Caco-2 (cell line): ENCODE measurements at regions of chr10 and their contacts with region 1.

Region 1: GRCh38 chr10:92757066-92757710 is 67.4 kb downstream of the HHEX start:
- DNase-seq: peak; percentile 42 to 51
- H3K4me3 ChIP-seq: no peak overlapping the region
- H3K4me3 Mint-ChIP-seq: no peak overlapping the region
- H3K27ac Mint-ChIP-seq: no peak overlapping the region
- H3K4me1 ChIP-seq: peaks cover 11% of the 10 kb centered on the region
- H3K4me1 Mint-ChIP-seq: peaks cover 18% of the 10 kb centered on the region
- H3K27me3 ChIP-seq: no peaks in the 10 kb centered on the region
- H3K27me3 Mint-ChIP-seq: peaks cover 14% of the 10 kb centered on the region
- CTCF ChIP-seq: no peak

Region 2: GRCh38 chr10:92697663-92698511 is 59.3 kb before region 1 on chr10:
- CTCF ChIA-PET with region 1: no interaction called
- POLR2A ChIA-PET with region 1: no interaction called
- intact Hi-C with region 1: loop called (anchors 1 kb)
- DNase-seq: peak in 1 of 2 experiments; percentile 59
- H3K4me3 ChIP-seq: no peak overlapping the region
- H3K4me3 Mint-ChIP-seq: peak overlapping the region; percentile 41
- H3K27ac Mint-ChIP-seq: peak overlapping the region; percentile 4
- H3K4me1 ChIP-seq: peaks cover 48% of the 10 kb centered on the region
- H3K4me1 Mint-ChIP-seq: peaks cover 38% of the 10 kb centered on the region
- H3K27me3 ChIP-seq: no peaks in the 10 kb centered on the region
- H3K27me3 Mint-ChIP-seq: no peaks in the 10 kb centered on the region
- CTCF ChIP-seq: no peak

Region 3: GRCh38 chr10:92810934-92811532 is 53.8 kb after region 1 on chr10:
- CTCF ChIA-PET with region 1: no interaction called
- POLR2A ChIA-PET with region 1: no interaction called
- intact Hi-C with region 1: loop called (anchors 5 kb)
- DNase-seq: peak in 1 of 2 experiments; percentile 14
- H3K4me3 ChIP-seq: no peak overlapping the region
- H3K4me3 Mint-ChIP-seq: no peak overlapping the region
- H3K27ac Mint-ChIP-seq: no peak overlapping the region
- H3K4me1 ChIP-seq: peaks cover 16% of the 10 kb centered on the region
- H3K4me1 Mint-ChIP-seq: peaks cover 25% of the 10 kb centered on the region
- H3K27me3 ChIP-seq: peaks cover 3% of the 10 kb centered on the region; the same call in 1 of the 2 replicates
- H3K27me3 Mint-ChIP-seq: peaks cover 14% of the 10 kb centered on the region
- CTCF ChIP-seq: no peak